CD8-positive, alpha-beta memory T cell (primary cell): ENCODE measurements at regions of chr11 and their contacts with region 1.

Region 1: DNA sequence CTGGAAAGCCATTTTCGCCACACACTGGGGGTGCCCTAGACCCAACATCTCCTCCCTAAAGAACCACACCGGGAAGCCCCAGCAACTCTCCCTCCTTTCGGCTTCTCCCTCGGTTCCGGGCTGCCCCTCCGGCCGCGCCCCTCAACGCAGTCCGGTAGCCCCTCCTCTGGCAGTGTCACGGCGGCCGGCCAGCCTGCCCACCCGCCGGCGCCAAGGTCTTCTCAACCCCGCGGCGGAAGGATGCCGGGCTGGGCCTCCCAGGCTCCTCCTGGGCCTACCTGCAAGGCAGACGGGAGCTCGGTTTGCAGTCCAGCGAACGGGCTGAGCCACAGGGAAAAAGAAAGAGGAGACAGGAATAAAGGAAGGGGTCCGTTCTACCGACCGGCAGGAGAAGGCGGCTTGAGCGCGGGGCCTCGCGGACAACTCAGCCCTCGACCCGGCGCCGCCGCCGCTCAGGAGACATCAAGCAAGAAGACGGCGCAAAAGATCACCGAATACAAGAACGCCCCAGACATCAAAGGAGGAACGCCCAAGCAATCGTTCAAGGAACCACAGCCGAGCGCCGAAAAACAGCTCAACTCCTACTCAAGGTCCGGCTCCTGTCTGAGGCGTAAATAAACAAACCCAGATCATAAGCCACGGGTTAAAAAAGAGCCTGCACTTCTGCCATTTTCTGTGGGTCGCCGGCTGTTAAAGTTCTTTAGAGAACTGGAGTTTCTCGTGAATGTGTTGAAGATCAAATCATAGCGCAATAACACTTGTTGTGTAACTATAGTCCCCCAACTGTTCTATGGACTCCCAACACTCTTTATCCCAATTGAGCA is at the start of gene AMBRA1:
- DNase-seq: peak; percentile 53 to 84 (median 75)
- H3K4me3 ChIP-seq: peak within 1 kb of the TSS; percentile 90
- H3K4me3 Mint-ChIP-seq: peak within 1 kb of the TSS; percentile 96 to 99 (median 98)
- H3K27ac ChIP-seq: peak within 1 kb of the TSS; percentile 71
- H3K27ac Mint-ChIP-seq: peak within 1 kb of the TSS; percentile 84 to 99 (median 96)
- H3K4me1 ChIP-seq: peaks cover 41% of the 10 kb centered on the region
- H3K4me1 Mint-ChIP-seq: peaks cover 34 to 49% (median 49%) of the 10 kb centered on the region in 3 donors
- H3K27me3 ChIP-seq: no peaks in the 10 kb centered on the region
- H3K27me3 Mint-ChIP-seq: peaks cover 0 to 1% of the 10 kb centered on the region in 2 donors
- total RNA-seq, gene AMBRA1: 31.3 to 33.3 TPM

Region 2: GRCh38 chr11:46445920-46446771 is 147.6 kb before region 1 on chr11:
- CTCF ChIA-PET with region 1: no interaction called
- POLR2A ChIA-PET with region 1: no interaction called
- DNase-seq: no peak
- H3K4me3 ChIP-seq: no peak overlapping the region
- H3K4me3 Mint-ChIP-seq: no peak overlapping the region
- H3K27ac ChIP-seq: no peak overlapping the region
- H3K27ac Mint-ChIP-seq: peak overlapping the region in 3 of 8 donors; percentile 6 to 70 (median 19)
- H3K4me1 ChIP-seq: no peaks in the 10 kb centered on the region
- H3K4me1 Mint-ChIP-seq: peaks cover 25 to 39% (median 26%) of the 10 kb centered on the region in 3 donors
- H3K27me3 ChIP-seq: no peaks in the 10 kb centered on the region
- H3K27me3 Mint-ChIP-seq: no peaks in the 10 kb centered on the region

Region 3: GRCh38 chr11:46475926-46476545 is 117.7 kb before region 1 on chr11:
- CTCF ChIA-PET with region 1: no interaction called
- POLR2A ChIA-PET with region 1: no interaction called
- DNase-seq: no peak
- H3K4me3 ChIP-seq: no peak overlapping the region
- H3K4me3 Mint-ChIP-seq: peak overlapping the region in 3 of 7 donors; percentile 8 to 27 (median 24)
- H3K27ac ChIP-seq: no peak overlapping the region
- H3K27ac Mint-ChIP-seq: peak overlapping the region in 7 of 8 donors; percentile 2 to 47 (median 24)
- H3K4me1 ChIP-seq: no peaks in the 10 kb centered on the region
- H3K4me1 Mint-ChIP-seq: peaks cover 33 to 54% (median 38%) of the 10 kb centered on the region in 3 donors
- H3K27me3 ChIP-seq: no peaks in the 10 kb centered on the region
- H3K27me3 Mint-ChIP-seq: no peaks in the 10 kb centered on the region

Region 4: DNA sequence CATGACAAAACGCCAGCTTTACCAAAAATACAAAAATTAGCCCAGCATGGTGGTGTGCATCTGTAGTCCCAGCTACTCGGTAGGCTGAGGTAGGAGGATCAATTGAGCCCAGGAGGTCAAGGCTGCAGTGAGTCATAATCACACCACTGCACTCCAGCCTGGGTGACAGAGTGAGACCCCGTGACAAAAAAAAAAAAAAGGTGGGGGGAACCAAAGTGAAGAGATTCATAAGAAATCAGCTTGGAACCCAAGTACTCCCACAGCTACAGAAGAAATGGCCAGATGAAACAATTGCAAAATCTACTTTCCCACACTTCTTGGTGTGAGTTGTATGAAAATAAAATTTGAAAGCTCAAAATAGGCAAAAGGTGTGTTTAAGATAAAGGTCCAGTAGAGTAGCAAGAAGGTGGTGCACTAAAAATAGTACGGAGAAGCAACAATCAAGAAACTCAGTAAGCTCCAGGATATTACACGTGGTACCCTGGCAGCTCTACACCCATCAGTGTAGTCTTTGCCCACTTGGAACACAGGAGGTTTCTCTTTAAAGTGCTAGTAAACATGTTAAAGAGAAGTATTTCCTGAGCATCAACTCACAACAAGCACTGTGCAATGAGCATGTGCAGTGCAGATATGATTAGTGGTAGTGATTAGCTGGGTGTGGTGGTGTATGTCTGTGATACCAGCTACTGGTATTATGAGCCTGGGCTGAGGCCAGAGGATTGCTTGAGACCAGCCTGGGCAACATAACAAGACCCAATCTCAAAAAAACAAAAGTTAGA is 18.0 kb after region 1 on chr11:
- CTCF ChIA-PET with region 1: interaction called, 13 read pairs
- POLR2A ChIA-PET with region 1: no interaction called
- DNase-seq: no peak
- H3K4me3 ChIP-seq: no peak overlapping the region
- H3K4me3 Mint-ChIP-seq: peak overlapping the region in 1 of 7 donors; percentile 24
- H3K27ac ChIP-seq: no peak overlapping the region
- H3K27ac Mint-ChIP-seq: peak overlapping the region in 2 of 8 donors; percentile 54 to 62
- H3K4me1 ChIP-seq: peaks cover 11% of the 10 kb centered on the region
- H3K4me1 Mint-ChIP-seq: peaks cover 14 to 29% (median 23%) of the 10 kb centered on the region in 3 donors
- H3K27me3 ChIP-seq: no peaks in the 10 kb centered on the region
- H3K27me3 Mint-ChIP-seq: peaks cover 0 to 3% of the 10 kb centered on the region in 2 donors